ENCODE measurements at regions of chr20 and their contacts with region 1.

Region 1: GRCh38 chr20:32357869-32358631 is at the start of gene ASXL1:
- H3K4me3 ChIP-seq: peak within 1 kb of the TSS; percentile 97
- H3K27ac ChIP-seq: peak within 1 kb of the TSS; percentile 88
- H3K4me1 ChIP-seq: peaks cover 17% of the 10 kb centered on the region
- CTCF ChIP-seq: no peak

Region 2: DNA sequence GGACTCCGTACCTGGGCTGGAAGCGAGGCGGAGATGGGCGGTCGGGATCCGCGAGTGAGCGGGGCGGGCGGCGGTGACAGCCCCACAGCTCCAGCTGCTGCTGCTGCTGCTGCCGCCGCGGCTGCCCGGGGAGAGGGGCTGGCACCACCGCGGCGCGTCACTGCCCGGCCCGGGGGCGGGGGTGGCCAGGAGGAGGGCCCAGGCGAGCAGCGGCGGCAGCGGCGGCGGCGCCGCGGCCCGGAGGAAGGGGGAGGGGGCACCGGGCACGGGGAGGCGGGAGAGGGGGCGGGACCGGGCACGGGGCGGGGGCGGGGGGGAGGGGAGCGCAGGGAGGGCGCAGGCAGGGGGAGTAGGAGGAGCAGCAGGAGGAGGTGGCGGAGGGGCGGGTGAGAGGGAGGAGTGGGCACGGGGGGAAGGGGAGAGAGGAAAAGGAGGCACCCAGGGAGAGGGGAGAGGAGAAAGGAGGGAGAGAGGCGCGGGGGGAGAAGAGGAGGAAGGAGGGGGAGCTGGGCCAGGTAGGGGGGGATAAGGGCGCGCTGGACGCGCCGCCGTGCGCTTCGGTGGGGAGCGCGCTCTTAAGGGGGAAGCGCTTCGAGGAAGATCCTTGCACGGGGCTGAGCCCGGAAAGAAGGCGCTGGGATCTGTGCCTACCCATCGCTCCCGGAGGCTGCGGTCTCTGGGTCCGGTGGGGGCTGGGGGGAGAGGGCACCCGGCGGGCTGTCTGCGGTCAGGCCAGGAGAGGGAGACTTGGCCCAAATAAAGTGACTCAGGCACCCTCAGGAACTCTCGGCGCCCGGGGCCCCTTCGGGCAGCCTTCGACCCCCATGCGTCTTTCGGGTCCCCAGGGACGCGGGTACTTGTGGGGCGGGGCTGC is 125.5 kb after region 1 on chr20:
- CTCF ChIA-PET with region 1: no interaction called
- POLR2A ChIA-PET with region 1: interaction called, 11 read pairs
- H3K4me3 ChIP-seq: peak overlapping the region; percentile 72
- H3K27ac ChIP-seq: peak overlapping the region; percentile 82; the same call in 1 of the 2 replicates
- H3K4me1 ChIP-seq: peaks cover 4% of the 10 kb centered on the region; the same call in 1 of the 2 replicates
- CTCF ChIP-seq: peak; percentile 32

Measured in HEK293 (cell line).